Sigmoid colon (tissue), 7 donors: ENCODE measurements at regions of chr15 and their contacts with region 1.

Region 1: GRCh38 chr15:51229907-51230330 is 108.5 kb downstream of the CYP19A1 start:
- DNase-seq: no peak
- H3K4me3 ChIP-seq: no peak overlapping the region
- H3K27ac ChIP-seq: no peak overlapping the region
- H3K4me1 ChIP-seq: peaks cover 0 to 6% (median 0%) of the 10 kb centered on the region in 4 donors
- H3K27me3 ChIP-seq: no peaks in the 10 kb centered on the region
- CTCF ChIP-seq: peak in 1 of 4 experiments; percentile 11
- EP300 ChIP-seq: no peak
- POLR2A ChIP-seq: no peak

Region 2: DNA sequence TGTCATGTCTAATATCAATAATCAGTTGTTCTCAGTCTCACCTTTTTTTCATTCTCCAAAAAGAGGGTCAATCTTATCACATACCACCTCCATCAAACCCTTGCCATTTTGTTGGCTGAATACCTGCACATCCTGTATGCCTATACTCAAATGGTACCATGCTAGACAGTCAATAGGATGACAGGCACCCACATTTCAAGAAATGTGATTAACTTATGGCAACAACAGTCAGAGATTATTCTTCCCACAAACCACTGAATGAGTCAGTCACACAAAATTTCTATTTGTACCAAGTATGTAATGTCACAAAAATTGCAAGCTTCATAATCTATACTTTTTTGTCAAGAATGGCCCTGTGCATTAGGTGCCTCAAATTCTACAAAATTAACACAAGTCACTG is 1053.0 kb before region 1 on chr15:
- intact Hi-C with region 1: no loop called
- DNase-seq: no peak
- H3K4me3 ChIP-seq: no peak overlapping the region
- H3K27ac ChIP-seq: no peak overlapping the region
- H3K4me1 ChIP-seq: peaks cover 0 to 2% (median 1%) of the 10 kb centered on the region in 4 donors
- H3K27me3 ChIP-seq: peaks cover 0 to 13% (median 8%) of the 10 kb centered on the region in 3 donors
- CTCF ChIP-seq: no peak
- EP300 ChIP-seq: no peak
- POLR2A ChIP-seq: no peak

Region 3: DNA sequence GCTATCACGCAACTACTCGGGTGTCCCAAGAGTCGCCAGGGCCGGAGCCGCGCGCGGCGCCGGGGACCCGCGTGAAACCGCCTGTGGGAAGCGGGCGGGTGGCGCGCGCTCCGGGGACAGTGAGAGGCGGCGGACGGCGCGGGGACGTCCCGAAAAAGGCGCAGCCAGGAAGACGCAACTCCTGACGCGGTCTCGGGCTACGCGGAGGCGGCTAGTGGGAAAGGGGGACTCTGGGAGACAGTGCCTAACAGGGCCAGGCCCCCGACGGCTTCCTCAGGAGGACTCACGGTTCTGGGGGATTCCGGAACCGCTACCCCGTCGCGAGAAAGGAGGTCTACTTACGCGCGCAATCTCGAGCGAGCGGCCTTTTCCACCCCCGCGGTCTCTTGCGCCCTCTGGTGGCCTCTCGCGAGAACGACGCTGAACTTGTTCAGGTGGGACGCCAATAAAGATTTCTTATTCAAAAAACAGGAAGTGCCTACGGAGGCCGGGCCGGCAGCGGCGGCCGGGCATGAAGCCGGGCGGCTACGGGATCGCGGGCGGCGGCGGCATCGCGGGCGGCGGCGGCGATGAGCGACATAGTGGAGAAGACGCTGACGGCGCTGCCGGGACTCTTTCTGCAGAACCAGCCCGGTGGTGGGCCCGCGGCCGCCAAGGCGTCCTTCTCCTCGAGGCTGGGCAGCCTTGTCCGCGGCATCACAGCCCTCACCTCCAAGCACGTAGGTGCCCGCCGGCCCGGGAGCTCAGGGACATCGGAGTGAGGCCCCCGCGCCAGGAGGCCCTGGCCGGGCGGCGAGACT is 321.5 kb before region 1 on chr15 and contains the start of gene AP4E1:
- intact Hi-C with region 1: no loop called
- DNase-seq: peak; percentile 96
- H3K4me3 ChIP-seq: peak within 1 kb of the TSS; percentile 78 to 96 (median 92)
- H3K27ac ChIP-seq: peak within 1 kb of the TSS; percentile 90 to 95 (median 93)
- H3K4me1 ChIP-seq: peaks cover 0 to 33% (median 26%) of the 10 kb centered on the region in 4 donors
- H3K27me3 ChIP-seq: no peaks in the 10 kb centered on the region
- CTCF ChIP-seq: peak; percentile 83 to 96 (median 90)
- EP300 ChIP-seq: no peak
- POLR2A ChIP-seq: peak in 1 of 2 donors; percentile 17
- total RNA-seq, gene AP4E1: 7.3 to 8.3 (median 8.0) TPM

Region 4: GRCh38 chr15:51144021-51144532 is 85.8 kb before region 1 on chr15:
- intact Hi-C with region 1: no loop called
- DNase-seq: no peak
- H3K4me3 ChIP-seq: no peak overlapping the region
- H3K27ac ChIP-seq: no peak overlapping the region
- H3K4me1 ChIP-seq: no peaks in the 10 kb centered on the region
- H3K27me3 ChIP-seq: no peaks in the 10 kb centered on the region
- CTCF ChIP-seq: no peak
- EP300 ChIP-seq: no peak
- POLR2A ChIP-seq: no peak

Region 5: GRCh38 chr15:51172193-51172592 is 57.7 kb before region 1 on chr15:
- intact Hi-C with region 1: loop called (anchors 10 kb)
- DNase-seq: no peak
- H3K4me3 ChIP-seq: no peak overlapping the region
- H3K27ac ChIP-seq: peak overlapping the region in 1 of 4 donors; percentile 48
- H3K4me1 ChIP-seq: peaks cover 0 to 14% (median 10%) of the 10 kb centered on the region in 4 donors
- H3K27me3 ChIP-seq: no peaks in the 10 kb centered on the region
- CTCF ChIP-seq: no peak
- EP300 ChIP-seq: no peak
- POLR2A ChIP-seq: no peak

Region 6: GRCh38 chr15:51524376-51524775 is 294.5 kb after region 1 on chr15:
- intact Hi-C with region 1: no loop called
- DNase-seq: no peak
- H3K4me3 ChIP-seq: no peak overlapping the region
- H3K27ac ChIP-seq: no peak overlapping the region
- H3K4me1 ChIP-seq: no peaks in the 10 kb centered on the region
- H3K27me3 ChIP-seq: no peaks in the 10 kb centered on the region
- CTCF ChIP-seq: no peak
- EP300 ChIP-seq: no peak
- POLR2A ChIP-seq: no peak